Body of pancreas (tissue), 4 donors: ENCODE measurements at regions of chr14 and their contacts with region 1.

Region 1: GRCh38 chr14:23469906-23470403 is 452 bp downstream of the NGDN start:
- DNase-seq: no peak
- ATAC-seq: no peak
- H3K4me3 ChIP-seq: peak overlapping the region; percentile 49 to 92
- H3K27ac ChIP-seq: peak overlapping the region in 3 of 4 donors; percentile 57 to 80 (median 73)
- H3K4me1 ChIP-seq: peaks cover 7% of the 10 kb centered on the region
- H3K27me3 ChIP-seq: no peaks in the 10 kb centered on the region
- CTCF ChIP-seq: no peak
- POLR2A ChIP-seq: no peak

Region 2: DNA sequence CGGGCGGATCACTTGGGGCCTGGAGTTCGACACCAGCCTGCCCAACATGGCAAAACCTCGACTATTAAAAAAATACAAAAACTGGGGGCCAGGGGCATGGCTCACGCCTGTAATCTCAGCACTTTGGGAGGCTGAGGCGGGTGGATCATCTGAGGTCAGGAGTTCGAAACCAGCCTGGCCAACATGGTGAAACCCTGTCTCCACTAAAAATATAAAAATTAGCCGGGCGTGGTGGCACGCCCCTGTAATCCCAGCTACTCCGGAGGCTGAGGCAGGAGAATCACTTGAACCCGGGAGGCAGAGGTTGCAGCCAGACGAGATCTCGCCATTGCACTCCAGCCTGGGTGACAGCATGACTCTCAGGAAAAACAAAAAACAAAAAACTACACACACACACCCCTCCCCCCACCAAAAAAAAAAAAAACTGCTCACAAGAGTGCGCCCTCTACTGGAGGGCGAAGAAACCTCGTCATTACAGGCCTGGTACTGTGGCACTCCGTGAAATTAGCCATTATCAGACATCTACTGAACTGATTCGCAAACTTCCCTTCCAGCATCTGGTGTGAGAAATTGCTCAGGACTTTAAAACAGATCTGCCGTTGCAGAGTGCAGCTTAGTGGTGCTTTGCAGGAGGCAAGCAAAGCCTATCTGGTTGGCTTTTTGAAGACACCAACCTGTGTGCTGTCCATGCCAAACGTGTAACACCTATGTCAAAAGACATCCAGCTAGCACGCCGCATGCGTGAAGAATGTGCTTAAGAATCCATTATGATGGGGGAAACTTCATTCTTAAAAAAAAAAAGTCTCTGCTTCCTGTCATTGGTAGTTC is 175.0 kb before region 1 on chr14:
- intact Hi-C with region 1: no loop called
- DNase-seq: peak; percentile 54 to 72 (median 61)
- ATAC-seq: peak; percentile 84
- H3K4me3 ChIP-seq: no peak overlapping the region
- H3K27ac ChIP-seq: peak overlapping the region in 1 of 4 donors; percentile 6
- H3K4me1 ChIP-seq: peaks cover 22% of the 10 kb centered on the region
- H3K27me3 ChIP-seq: no peaks in the 10 kb centered on the region
- CTCF ChIP-seq: peak; percentile 68 to 99 (median 89)
- POLR2A ChIP-seq: peak in 2 of 3 donors; percentile 17 to 23

Region 3: GRCh38 chr14:23555882-23556699 is 86.1 kb after region 1 on chr14 and contains the start of gene THTPA:
- intact Hi-C with region 1: loop called (anchors 5 kb)
- DNase-seq: peak; percentile 92 to 95 (median 94)
- ATAC-seq: peak; percentile 85
- H3K4me3 ChIP-seq: peak within 1 kb of the TSS; percentile 59 to 72
- H3K27ac ChIP-seq: peak within 1 kb of the TSS; percentile 89 to 98 (median 94)
- H3K4me1 ChIP-seq: peaks cover 26% of the 10 kb centered on the region
- H3K27me3 ChIP-seq: no peaks in the 10 kb centered on the region
- CTCF ChIP-seq: no peak
- POLR2A ChIP-seq: peak; percentile 31 to 78 (median 75)
- total RNA-seq, gene THTPA: 11.7 to 43.2 TPM

Region 4: DNA sequence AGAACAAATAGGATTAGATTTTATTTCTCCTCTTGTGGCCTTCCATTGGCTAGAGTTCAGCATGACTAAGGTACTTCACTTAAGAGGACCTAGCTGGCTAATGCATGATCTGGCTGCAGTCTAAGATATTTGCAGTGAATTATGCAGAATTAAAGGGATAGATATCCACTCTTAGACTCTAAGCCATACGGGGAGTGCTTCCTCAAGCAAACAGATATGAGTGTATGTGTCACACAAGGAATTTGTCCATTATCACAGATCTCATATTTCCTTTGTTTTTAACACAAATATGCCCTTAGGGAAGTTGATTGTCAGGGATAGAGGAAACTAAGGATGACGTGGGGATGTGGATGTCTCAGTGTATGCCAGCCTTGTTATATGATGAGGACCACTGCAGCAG is 395.5 kb after region 1 on chr14:
- intact Hi-C with region 1: no loop called
- DNase-seq: no peak
- ATAC-seq: no peak
- H3K4me3 ChIP-seq: no peak overlapping the region
- H3K27ac ChIP-seq: no peak overlapping the region
- H3K4me1 ChIP-seq: peaks cover 14% of the 10 kb centered on the region
- H3K27me3 ChIP-seq: no peaks in the 10 kb centered on the region
- CTCF ChIP-seq: no peak
- POLR2A ChIP-seq: no peak